Transverse colon (tissue), 4 donors: ENCODE measurements at regions of chr9 and their contacts with region 1.

Region 1: DNA sequence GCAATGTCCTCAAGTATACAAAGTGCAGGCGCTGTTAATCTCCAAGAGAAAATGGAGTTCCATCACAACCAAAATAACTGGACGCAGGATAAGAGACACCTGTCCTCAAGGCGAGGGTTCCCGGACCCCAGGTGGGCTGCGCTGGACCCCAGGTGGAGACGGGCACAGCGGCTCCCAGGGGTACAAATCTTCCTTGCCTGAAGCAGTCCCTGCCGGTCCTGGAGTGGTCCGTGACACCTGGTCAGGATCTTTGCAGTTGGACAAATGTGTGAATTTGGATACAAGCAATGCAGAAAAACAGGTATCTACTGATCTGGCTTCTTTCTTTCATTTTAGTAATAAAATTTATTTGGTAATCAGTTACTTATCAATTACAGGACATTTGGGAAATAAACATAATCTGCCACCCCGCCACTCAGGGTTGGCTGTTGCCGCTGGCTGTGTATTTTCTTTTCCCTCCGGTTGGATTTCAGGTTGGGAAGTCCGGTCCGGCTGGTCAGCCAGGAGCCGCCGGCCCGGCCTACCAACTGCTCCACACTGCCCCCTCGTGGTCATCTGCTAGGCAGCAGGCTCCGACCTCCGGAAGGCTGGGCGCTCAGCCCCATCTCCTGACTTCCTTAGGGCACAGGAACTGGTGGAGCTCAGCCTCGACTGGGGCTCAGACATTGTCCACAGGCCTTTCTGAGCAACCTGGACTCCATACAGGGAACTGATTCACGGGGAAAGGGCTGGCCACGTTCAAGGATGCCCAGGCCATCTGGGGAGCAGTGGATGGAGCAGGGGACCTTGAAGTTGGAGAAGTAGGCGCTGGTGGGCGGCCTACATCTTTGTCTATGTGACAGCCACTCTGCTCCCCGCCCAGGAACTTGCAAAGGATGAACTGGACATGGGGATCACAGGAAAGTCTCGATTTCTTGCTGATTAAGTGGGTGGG is 43.4 kb downstream of the NXNL2 start:
- DNase-seq: peak; percentile 85
- H3K4me3 ChIP-seq: peak overlapping the region in 1 of 4 donors; percentile 18
- H3K27ac ChIP-seq: no peak overlapping the region
- H3K4me1 ChIP-seq: peaks cover 0 to 6% (median 1%) of the 10 kb centered on the region in 4 donors
- H3K27me3 ChIP-seq: no peaks in the 10 kb centered on the region
- CTCF ChIP-seq: peak; percentile 90 to 98 (median 98)
- EP300 ChIP-seq: no peak
- POLR2A ChIP-seq: no peak

Region 2: DNA sequence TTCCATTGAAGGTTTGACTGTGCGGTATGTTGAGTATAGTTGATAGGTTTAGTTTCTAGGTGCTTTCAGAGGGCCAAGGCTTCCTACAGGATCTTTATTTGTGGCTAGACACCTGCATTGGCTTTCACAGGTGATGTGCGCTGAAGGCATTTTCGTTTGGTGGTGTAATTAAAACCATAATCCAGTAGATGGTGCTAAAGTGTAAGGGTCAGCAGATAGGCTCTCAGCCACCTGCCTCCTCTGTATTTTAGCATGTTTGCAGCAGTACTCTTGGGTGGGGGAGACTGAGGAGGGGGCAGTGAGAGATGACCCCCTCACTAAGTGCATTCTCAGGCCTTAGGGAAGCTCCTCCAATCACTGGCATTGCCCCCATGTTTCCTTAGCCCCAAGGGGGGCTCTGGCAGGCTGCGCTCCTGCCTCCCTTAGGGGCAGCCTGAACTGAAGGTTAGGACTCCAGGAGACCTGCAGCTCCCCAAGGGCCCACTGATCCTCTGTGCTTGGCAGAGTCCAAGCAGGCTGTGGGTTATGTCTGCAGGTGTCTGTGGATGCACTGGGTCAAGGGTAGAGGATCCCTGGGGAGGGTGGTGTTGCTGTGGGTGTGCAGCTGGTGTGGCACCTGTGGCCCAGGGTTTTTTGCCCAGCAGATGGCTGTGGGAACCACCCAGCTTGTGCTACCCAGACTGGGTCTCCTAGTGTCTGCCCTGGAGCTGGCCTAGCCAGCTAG is 627.5 kb before region 1 on chr9:
- in situ Hi-C with region 1: loop called in 3 of 4 experiments (anchors 10 to 25 kb)
- intact Hi-C with region 1: no loop called
- DNase-seq: no peak
- H3K4me3 ChIP-seq: no peak overlapping the region
- H3K27ac ChIP-seq: no peak overlapping the region
- H3K4me1 ChIP-seq: no peaks in the 10 kb centered on the region
- H3K27me3 ChIP-seq: no peaks in the 10 kb centered on the region
- CTCF ChIP-seq: peak; percentile 42 to 63 (median 52)
- EP300 ChIP-seq: no peak
- POLR2A ChIP-seq: no peak

Region 3: GRCh38 chr9:88076286-88077090 is 501.9 kb before region 1 on chr9:
- in situ Hi-C with region 1: loop called in 1 of 4 experiments (anchors 25 kb)
- intact Hi-C with region 1: no loop called
- DNase-seq: peak; percentile 91
- H3K4me3 ChIP-seq: peak overlapping the region; percentile 33 to 75 (median 46)
- H3K27ac ChIP-seq: peak overlapping the region; percentile 89 to 92 (median 91)
- H3K4me1 ChIP-seq: peaks cover 0 to 21% (median 10%) of the 10 kb centered on the region in 4 donors
- H3K27me3 ChIP-seq: no peaks in the 10 kb centered on the region
- CTCF ChIP-seq: peak in 4 of 5 experiments; percentile 24 to 44 (median 32)
- EP300 ChIP-seq: no peak
- POLR2A ChIP-seq: peak; percentile 62

Region 4: GRCh38 chr9:88106491-88106890 is 471.9 kb before region 1 on chr9:
- in situ Hi-C with region 1: loop called in 1 of 4 experiments (anchors 10 kb)
- intact Hi-C with region 1: loop called (anchors 10 kb)
- DNase-seq: peak; percentile 57
- H3K4me3 ChIP-seq: no peak overlapping the region
- H3K27ac ChIP-seq: no peak overlapping the region
- H3K4me1 ChIP-seq: no peaks in the 10 kb centered on the region
- H3K27me3 ChIP-seq: peaks cover 12% of the 10 kb centered on the region
- CTCF ChIP-seq: peak; percentile 49 to 75 (median 66)
- EP300 ChIP-seq: no peak
- POLR2A ChIP-seq: no peak

Region 5: GRCh38 chr9:88258027-88258426 is 320.4 kb before region 1 on chr9:
- in situ Hi-C with region 1: no loop called
- intact Hi-C with region 1: no loop called
- DNase-seq: no peak
- H3K4me3 ChIP-seq: no peak overlapping the region
- H3K27ac ChIP-seq: peak overlapping the region in 2 of 4 donors; percentile 15 to 20
- H3K4me1 ChIP-seq: peaks cover 0 to 15% (median 4%) of the 10 kb centered on the region in 4 donors
- H3K27me3 ChIP-seq: no peaks in the 10 kb centered on the region
- CTCF ChIP-seq: no peak
- EP300 ChIP-seq: no peak
- POLR2A ChIP-seq: no peak